Right ventricle myocardium superior (tissue), 1 donor: ENCODE measurements at regions of chr1 and their contacts with region 1.

Region 1: GRCh38 chr1:77794550-77794949 is 15.1 kb downstream of the MIGA1 start:
- DNase-seq: no peak
- ATAC-seq: no peak

Region 2: GRCh38 chr1:77817368-77818209 is 23.0 kb after region 1 on chr1:
- intact Hi-C with region 1: loop called (anchors 2 kb)
- DNase-seq: no peak
- ATAC-seq: no peak